Naive thymus-derived CD4-positive, alpha-beta T cell (primary cell): ENCODE measurements at regions of chr12 and their contacts with region 1.

Region 1: DNA sequence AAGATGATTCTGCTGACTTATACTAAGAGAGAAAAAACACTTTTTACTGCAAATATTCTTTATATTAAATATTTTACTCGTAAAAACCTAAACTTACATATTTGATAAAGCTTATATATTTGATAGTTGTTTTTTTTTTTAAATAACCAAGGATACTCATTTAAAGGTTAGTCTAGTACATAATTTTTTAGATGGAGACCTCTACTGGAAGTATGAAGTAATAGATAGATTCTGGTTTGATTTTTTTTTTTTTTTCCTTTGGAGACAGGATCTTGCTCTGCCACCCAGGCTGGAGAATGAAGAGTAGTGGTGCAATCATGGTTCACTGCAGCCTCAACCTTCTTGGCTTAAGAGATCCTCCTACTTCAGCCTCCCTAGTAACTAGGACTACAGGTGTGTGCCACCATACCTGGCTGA is 16.4 kb downstream of the ARID2 start:
- DNase-seq: peak in 6 of 9 donors; percentile 20 to 58 (median 45)
- ATAC-seq: peak; percentile 77
- H3K4me3 ChIP-seq: no peak overlapping the region
- H3K4me3 Mint-ChIP-seq: peak overlapping the region in 3 of 10 donors; percentile 12 to 33 (median 20)
- H3K27ac ChIP-seq: no peak overlapping the region
- H3K27ac Mint-ChIP-seq: peak overlapping the region in 2 of 9 donors; percentile 0 to 47
- H3K4me1 ChIP-seq: peaks cover 13 to 28% of the 10 kb centered on the region in 2 donors
- H3K4me1 Mint-ChIP-seq: peaks cover 44 to 83% (median 77%) of the 10 kb centered on the region in 7 donors
- H3K27me3 ChIP-seq: no peaks in the 10 kb centered on the region
- H3K27me3 Mint-ChIP-seq: no peaks in the 10 kb centered on the region

Region 2: GRCh38 chr12:45170456-45171042 is 575.3 kb before region 1 on chr12:
- CTCF ChIA-PET with region 1: no interaction called
- POLR2A ChIA-PET with region 1: no interaction called
- intact Hi-C with region 1: loop called in 1 of 2 experiments (anchors 1 kb)
- DNase-seq: peak; percentile 42 to 77 (median 63)
- ATAC-seq: peak; percentile 76
- H3K4me3 ChIP-seq: no peak overlapping the region
- H3K4me3 Mint-ChIP-seq: no peak overlapping the region
- H3K27ac ChIP-seq: no peak overlapping the region
- H3K27ac Mint-ChIP-seq: peak overlapping the region in 1 of 9 donors; percentile 4
- H3K4me1 ChIP-seq: no peaks in the 10 kb centered on the region
- H3K4me1 Mint-ChIP-seq: peaks cover 0 to 4% (median 0%) of the 10 kb centered on the region in 7 donors
- H3K27me3 ChIP-seq: no peaks in the 10 kb centered on the region
- H3K27me3 Mint-ChIP-seq: peaks cover 0 to 7% (median 4%) of the 10 kb centered on the region in 5 donors